Activated CD4-positive, alpha-beta T cell treated with anti-CD3 and anti-CD28 coated beads, Interleukin-2, amount 10 ng/mL, durations not matched to agents 24 days and 14 days (primary cell): ENCODE measurements at regions of chr17 and their contacts with region 1.

Region 1: GRCh38 chr17:47840740-47841603 is at the start of gene SCRN2:
- DNase-seq: peak; percentile 98
- H3K4me3 Mint-ChIP-seq: peak within 1 kb of the TSS; percentile 100
- H3K27ac Mint-ChIP-seq: peak within 1 kb of the TSS; percentile 98
- H3K4me1 Mint-ChIP-seq: peaks cover 28% of the 10 kb centered on the region
- H3K27me3 Mint-ChIP-seq: peaks cover 18% of the 10 kb centered on the region
- total RNA-seq, gene SCRN2: 24.3 and 24.8 TPM in 2 replicates

Region 2: DNA sequence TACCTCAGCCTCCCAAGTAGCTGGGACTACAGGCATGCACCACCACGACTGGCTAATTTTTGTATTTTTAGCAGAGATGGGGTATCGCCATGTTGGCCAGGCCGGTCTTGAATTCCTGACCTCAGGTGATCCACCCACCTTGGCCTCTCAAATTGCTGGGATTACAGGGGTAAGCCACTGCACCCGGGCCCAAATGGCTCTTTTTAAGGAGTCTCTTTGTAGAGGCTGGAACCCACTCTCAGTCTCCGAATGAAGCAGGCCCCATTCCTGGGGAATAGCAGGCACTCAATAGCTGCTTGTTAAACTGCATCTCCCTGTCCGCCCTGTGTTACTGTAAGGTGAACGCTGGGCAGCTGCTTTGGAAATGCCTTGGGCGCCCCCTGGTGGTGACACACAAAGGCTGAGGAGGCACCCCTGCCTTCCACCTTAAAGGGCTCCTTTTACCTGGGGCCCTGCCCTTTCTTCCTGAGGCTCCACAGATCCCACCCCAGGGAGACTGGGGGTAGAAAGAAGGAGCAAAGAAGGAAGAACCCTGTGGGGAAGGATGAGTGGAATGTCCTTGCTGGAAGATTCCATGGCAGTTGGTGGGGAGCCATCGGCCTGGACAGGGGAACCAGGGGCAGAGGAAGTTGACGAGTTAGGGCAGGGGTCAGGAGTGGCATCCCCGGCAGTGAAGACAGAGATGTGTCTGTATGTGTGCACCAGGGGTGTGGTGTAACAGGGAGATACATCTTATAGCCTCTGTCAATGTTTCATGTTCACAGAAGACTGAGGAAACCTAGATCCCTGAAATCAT is 49.0 kb after region 1 on chr17:
- intact Hi-C with region 1: loop called (anchors 1 kb)
- DNase-seq: peak; percentile 96
- H3K4me3 Mint-ChIP-seq: no peak overlapping the region
- H3K27ac Mint-ChIP-seq: no peak overlapping the region
- H3K4me1 Mint-ChIP-seq: peaks cover 18% of the 10 kb centered on the region
- H3K27me3 Mint-ChIP-seq: no peaks in the 10 kb centered on the region

Region 3: DNA sequence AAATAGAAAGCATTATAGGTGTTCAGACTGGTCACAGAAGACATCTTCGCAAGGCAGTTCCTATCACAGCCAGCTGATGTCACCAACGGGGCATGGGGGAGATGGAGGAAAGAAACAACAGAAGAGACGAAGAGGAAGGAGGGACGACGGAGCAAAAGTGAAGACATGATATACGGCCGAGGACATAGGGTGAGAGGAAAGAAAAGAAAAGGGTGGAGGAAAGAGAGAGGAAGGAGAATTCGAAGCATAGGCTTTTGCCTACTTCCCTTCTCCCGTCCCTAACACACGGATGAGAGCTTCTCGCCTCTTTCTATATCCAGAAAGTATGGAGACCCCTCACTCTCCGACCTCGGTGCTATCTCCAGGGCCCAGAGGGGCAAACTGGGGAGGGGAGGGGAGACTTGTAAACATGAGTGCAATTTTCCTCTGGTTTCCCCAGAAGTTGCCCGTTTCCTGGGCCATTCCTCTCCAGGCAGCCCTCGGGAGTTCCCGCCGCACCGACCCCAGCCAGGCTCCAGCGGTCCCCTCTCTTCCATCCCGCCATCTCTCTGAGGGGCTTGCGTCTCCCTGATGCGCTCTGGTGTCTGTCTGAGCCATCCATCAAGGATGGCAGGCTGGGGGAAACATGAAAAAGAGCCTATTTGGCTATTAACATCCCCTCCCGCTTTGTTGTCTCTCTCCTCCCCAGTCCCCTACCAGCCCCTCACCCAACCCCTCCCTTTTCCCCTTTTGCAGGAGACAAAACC is 170.6 kb after region 1 on chr17:
- intact Hi-C with region 1: loop called (anchors 5 kb)
- DNase-seq: peak; percentile 88
- H3K4me3 Mint-ChIP-seq: peak overlapping the region; percentile 81
- H3K27ac Mint-ChIP-seq: peak overlapping the region; percentile 22
- H3K4me1 Mint-ChIP-seq: peaks cover 19% of the 10 kb centered on the region
- H3K27me3 Mint-ChIP-seq: peaks cover 29% of the 10 kb centered on the region